Dorsolateral prefrontal cortex (tissue), 120 donors: ENCODE measurements at regions of chr3 and their contacts with region 1.

Region 1: DNA sequence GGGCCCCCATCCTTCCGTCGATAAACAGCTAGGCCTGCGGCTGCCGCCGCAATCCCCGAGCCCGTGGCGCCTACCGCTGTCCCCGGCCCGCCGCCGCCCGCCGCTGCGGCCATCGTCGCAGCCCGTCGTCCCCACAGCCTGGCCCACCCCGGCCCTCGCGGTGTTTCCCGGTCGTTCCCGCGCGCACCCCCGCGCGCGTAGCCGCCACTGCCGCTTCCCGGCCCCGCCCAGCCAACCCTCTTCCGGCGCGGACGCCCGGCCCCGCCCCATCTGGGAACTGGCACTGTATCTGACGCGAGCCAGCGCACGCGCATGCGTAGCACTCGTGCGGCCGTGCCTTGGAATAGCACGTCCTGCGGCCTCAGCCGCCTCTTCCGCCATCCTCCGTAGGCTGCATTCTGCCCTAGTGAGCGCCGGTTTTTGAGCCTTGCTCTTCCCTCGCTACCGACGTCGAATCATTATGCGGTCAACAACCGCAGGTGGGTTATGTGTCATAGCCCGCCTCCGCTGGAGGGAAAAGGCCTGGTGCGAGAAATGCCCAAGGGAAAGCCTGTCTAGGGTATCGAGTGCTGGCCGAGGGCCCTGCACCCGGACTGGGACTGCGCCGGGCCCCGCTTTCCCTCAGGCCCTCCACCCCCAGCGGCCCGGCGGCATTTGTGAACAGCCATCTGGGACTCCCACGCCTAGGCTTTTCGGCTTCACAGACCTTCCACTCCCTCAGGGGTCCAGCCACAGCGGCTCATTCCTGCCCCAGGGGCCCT is at the start of gene SMARCC1:
- DNase-seq: peak; percentile 94 to 98 (median 96)
- H3K4me3 ChIP-seq: peak within 1 kb of the TSS; percentile 67 to 100 (median 90)
- H3K27ac ChIP-seq: peak within 1 kb of the TSS; percentile 76 to 100 (median 98)
- H3K27me3 ChIP-seq: no peaks in the 10 kb centered on the region
- CTCF ChIP-seq: peak in 41 of 56 donors; percentile 10 to 62 (median 32)
- total RNA-seq, gene SMARCC1: 32.9 to 86.8 (median 53.7) TPM

Region 2: DNA sequence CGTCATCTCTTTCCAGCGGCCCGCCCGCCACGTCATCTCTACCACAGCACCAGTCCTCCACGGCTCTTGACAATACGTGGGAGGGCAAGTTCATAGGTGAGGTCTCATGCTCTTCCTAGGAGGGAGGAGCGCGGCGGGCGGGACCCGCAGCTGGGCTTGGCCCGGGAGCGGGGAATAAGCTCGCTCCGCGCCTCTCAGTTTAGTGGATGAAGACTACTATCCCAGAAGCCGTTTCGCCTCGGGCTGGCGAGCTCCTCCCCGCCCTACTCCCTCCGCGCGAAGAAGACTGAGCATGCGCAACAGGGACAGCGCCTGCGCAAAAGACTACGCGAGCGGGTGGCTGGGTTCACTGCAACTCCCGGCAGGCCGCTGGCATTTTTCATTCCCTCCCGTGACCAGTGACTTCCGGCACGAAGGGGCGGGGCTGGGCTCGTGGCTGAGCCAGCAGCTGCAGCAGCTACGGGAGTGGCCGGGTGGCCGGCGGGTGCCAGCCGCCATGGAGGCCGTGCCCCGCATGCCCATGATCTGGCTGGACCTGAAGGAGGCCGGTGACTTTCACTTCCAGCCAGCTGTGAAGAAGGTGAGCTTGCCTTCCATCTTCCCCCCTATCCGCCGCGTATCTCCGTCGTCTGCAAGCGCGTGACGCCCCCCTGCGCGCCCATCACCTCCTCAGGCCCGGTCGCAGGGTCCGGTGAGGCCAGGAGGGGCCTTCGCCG is 401.1 kb before region 1 on chr3 and contains the start of gene PTPN23:
- intact Hi-C with region 1: loop called in 1 of 2 experiments (anchors 5 kb)
- DNase-seq: peak; percentile 93 to 99 (median 96)
- H3K4me3 ChIP-seq: peak within 1 kb of the TSS; percentile 55 to 100 (median 91)
- H3K27ac ChIP-seq: peak within 1 kb of the TSS; percentile 25 to 98 (median 93)
- H3K27me3 ChIP-seq: no peaks in the 10 kb centered on the region
- CTCF ChIP-seq: peak in 30 of 56 donors; percentile 6 to 57 (median 30)
- total RNA-seq, gene PTPN23: 40.8 to 75.9 (median 53.6) TPM

Region 3: DNA sequence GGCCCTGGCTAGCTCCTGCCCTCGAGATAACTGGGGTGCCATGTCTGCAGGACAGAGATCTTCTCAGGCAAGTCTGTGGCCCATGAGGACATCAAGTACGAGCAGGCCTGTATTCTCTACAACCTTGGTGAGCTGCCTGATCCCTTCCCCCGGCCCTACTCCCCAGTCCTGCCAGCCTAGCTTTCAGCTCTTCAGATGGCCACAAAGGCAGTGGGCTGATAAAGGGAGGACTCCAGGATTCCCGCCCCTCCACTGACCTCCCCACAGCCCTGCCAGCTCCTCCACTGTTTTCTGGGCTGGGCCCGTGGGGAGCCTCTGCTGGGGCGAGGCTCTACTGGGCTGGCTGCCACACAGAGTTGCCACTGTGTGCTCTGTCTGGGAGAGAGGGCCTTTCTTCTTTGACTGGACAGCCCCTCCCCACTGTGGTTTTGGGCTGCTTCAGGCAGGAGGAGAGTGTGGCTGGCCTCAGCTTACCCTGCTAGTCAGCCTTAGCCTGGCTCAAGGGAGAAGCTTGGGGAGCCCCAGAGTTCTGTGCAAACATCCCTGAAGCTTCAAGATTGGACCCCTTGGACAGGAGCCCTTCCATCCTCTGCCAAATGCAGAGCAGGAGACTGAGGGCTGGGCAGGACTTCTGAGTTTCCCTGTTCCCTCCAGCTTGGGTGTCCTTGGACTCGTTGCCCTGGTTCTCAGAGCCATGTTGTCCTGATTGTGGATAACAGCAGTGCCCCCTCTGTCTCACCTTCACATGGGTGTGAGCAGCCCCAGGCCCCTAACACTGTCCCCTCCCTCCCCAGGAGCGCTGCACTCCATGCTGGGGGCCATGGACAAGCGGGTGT is 376.7 kb before region 1 on chr3:
- intact Hi-C with region 1: no loop called
- DNase-seq: peak in 7 of 10 donors; percentile 43 to 79 (median 67)
- H3K4me3 ChIP-seq: peak overlapping the region in 1 of 59 donors; percentile 4
- H3K27ac ChIP-seq: peak overlapping the region in 58 of 59 donors; percentile 3 to 92 (median 85)
- H3K27me3 ChIP-seq: no peaks in the 10 kb centered on the region
- CTCF ChIP-seq: peak in 1 of 56 donors; percentile 26

Region 4: DNA sequence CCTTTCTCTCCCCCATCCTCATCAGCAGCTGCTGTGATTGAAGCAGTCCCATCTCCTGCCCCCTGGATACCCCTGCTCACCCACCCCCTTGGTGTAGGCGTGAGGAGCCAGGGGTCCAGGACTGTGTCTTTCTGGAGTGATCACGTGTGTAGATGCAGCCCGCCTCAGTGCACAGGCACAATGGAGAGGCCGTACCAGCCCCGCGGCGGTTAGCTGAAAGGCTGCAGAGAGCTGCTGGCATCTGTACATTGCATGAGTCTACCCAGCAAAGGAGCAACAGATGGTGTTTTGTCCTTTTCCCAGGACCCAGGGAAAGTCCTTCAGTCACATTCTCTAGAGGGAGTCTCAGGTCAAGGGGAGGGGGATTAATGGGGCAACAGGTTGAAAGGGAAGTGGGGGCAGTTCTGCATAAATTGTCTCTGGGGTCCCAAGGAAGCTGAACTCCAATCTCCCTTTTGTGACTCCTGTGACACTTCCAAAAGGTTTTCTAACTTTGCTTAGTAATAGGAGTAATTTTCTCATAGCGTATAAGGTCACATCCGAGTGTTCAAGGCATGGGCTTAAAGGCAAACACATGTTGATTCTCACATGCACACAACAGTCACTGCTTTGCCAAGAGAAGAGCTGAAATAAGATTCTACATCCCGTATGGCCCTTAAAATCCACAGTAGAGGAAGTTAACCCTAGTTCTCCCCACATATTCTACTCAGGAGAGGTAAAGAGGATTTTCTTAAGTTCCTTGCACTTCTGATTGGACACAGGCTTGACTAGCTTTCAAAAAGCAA is 210.3 kb before region 1 on chr3:
- intact Hi-C with region 1: loop called in 1 of 2 experiments (anchors 5 kb)
- DNase-seq: peak in 9 of 10 donors; percentile 43 to 72 (median 56)
- H3K4me3 ChIP-seq: peak overlapping the region in 9 of 59 donors; percentile 2 to 47 (median 9)
- H3K27ac ChIP-seq: peak overlapping the region in 47 of 59 donors; percentile 3 to 91 (median 74)
- H3K27me3 ChIP-seq: no peaks in the 10 kb centered on the region
- CTCF ChIP-seq: no peak

Region 5: GRCh38 chr3:47678446-47679338 is 103.2 kb before region 1 on chr3:
- intact Hi-C with region 1: loop called in 1 of 2 experiments (anchors 10 kb)
- DNase-seq: no peak
- H3K4me3 ChIP-seq: no peak overlapping the region
- H3K27ac ChIP-seq: peak overlapping the region in 41 of 59 donors; percentile 0 to 97 (median 64)
- H3K27me3 ChIP-seq: no peaks in the 10 kb centered on the region
- CTCF ChIP-seq: no peak